ENCODE measurements at regions of chr21 and their contacts with region 1.

Region 1: DNA sequence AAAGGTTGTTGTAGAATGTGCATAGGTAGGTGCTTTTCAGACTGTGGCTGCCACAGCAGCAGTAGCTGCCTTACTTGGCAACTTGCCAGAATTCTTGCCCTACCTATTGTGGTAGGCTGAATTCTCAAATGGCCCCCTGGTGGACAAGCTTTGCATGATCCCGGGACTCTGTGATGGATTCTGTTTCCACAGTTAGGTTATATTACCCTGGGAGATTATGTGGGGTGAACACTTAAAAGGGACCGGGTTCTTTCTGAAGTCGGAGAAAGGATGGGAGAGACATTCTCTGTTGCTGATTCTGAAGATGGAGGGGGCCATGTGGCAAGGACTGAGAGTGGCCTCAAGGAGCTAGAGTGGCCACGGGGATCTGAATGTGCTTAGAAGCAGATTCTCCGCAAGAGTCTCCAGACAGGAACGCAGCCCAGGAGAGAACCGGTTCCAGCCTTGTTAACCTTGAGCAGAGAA is 32.1 kb upstream of the KCNE1 start:
- DNase-seq: peak; percentile 71 to 87
- H3K4me3 ChIP-seq: no peak overlapping the region
- H3K4me1 ChIP-seq: no peaks in the 10 kb centered on the region
- H3K27me3 ChIP-seq: no peaks in the 10 kb centered on the region

Region 2: DNA sequence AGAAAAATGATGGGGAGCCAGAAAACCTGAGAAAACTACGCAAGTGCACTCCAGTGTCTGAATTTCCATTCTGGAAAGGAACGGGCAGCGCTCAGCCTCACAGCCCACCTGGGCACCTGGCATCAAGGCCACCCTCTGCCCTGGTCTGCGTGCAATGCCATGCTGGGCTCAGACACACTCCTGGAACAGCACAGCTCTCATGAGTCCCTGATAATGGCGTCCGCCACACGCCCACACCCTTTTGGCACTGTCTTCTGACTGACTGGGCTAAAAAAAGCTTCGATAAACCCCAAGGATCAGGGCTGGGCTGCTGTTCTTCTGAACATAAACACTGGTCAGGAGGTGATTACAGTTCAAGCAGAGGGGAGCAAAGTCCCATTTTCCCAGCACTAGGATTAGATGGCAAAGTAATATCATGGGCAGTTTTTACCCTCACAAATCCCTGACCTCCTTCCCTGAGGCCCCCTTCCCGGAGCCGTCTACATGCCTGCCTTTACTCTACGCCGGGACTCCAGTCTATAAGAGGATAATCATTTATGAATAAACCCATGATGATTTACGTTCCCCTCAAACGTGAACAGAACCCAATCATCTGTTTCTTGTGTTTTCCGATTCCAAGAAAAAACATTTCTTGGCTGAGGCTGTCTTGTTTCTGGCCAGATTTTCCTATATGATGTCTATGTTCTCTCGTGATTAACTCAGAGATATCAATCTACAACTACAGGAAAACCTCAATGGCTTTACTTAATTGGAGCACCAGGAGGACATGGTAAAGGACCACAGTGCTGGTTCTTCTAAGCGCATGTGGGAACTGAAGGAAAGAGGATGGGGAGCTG is 48.3 kb after region 1 on chr21:
- in situ Hi-C with region 1: loop called (anchors 5 kb)
- DNase-seq: no peak
- H3K4me3 ChIP-seq: no peak overlapping the region
- H3K4me1 ChIP-seq: no peaks in the 10 kb centered on the region
- H3K27me3 ChIP-seq: no peaks in the 10 kb centered on the region

Region 3: DNA sequence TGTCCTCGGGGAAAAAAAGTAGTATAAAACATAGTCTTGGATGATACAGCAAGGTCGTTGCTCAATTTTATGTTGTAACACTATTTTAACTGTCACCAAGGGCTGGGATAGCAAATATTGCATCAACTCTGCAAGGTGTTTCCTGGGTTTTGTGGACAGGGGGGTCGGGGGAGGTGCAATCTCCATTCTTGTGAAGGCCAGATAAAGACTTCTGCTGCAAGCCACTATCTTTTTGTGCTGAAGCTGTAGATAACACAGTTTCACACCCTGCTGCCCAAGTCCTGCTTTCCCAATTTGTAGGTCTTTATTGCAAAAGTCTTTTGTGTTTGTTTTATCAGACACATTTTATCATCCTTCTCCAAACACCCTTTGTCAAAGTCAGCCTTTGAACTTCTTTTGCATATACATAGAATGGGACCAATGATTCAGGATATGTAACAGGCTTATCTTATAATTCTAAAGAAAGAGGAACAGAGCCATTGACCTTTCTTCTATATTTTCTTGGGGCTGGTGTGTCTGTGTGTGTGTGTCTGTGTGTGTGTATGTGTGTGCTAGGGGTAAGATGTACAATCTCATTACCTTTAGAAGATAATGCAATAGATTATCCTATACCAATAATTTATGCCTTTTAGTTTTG is 364.5 kb after region 1 on chr21:
- in situ Hi-C with region 1: no loop called
- DNase-seq: peak in 1 of 2 experiments; percentile 20
- H3K4me3 ChIP-seq: no peak overlapping the region
- H3K4me1 ChIP-seq: peaks cover 34% of the 10 kb centered on the region
- H3K27me3 ChIP-seq: peaks cover 12% of the 10 kb centered on the region

Measured in HAP-1 (cell line).